ENCODE measurements at regions of chr5 and their contacts with region 1.

Region 1: DNA sequence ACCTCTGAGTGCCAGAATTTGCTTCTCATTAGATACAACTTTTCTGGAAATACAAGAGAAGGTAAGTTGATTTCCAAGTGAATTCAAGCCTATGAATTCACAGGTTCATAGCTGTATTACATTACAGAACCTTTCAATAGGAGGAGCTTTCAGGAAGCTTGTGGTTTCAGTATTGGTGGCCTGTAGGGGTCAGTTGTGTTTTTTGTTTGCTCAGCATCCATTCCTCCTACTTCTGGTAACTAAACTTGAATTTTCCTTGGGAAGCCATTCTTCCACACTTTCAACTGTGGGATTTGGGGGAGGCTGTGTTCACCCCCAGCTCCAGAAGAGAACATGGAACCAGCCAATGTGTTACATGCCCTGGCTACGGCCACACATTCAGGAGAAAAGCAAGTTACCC is 5.6 kb upstream of the CYSTM1 start:
- DNase-seq: no peak
- H3K4me3 ChIP-seq: no peak overlapping the region
- H3K27ac ChIP-seq: no peak overlapping the region
- H3K4me1 ChIP-seq: peaks cover 0 to under 1% (median 0%) of the 10 kb centered on the region in 4 experiments; a peak in 3 of 7 replicates
- H3K27me3 ChIP-seq: no peaks in the 10 kb centered on the region
- CTCF ChIP-seq: peak in 2 of 3 experiments; percentile 22 to 39; a peak in 2 of 4 replicates
- EP300 ChIP-seq: no peak
- POLR2A ChIP-seq: no peak
- RAD21 ChIP-seq: peak; percentile 16 to 38; a peak in 2 of 4 replicates

Region 2: DNA sequence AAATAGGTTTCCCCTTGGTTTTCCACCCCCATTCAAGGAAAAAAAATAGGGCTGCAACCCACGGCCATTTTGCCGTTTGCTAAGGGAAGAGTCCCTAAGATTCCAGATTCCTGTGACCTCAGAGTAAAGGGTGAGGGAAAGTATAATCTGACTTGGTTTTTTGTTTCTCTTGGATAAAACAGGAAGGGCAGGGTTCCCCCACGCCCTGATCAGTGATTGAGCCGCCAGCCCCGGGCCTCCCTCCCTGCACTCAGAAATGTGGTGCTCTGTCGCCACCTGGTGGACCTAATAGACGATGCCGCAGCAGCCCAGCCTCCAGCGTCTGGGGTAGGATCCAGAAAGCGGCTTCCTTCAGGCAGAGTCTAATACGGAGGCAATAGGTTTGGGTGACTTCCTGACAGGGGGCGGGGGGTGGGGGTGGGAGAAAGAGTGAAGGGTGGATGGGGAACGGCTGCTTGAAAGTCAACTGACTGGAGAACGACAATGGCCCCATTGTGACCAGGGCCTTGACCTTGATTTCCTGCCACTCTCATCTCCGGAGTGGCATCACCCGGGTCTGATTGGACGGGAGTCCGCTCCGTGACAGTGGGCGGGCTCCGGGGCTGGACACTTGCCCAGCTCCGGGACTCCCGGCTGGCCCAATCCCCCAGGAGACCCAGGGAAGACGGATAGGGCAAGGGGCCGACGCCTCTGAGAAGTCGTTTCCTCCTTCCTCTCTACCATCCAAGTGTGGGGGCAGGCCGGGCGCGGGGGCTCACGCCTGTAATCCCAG is 12.2 kb before region 1 on chr5:
- CTCF ChIA-PET with region 1: interaction called, 19 read pairs
- POLR2A ChIA-PET with region 1: interaction called, 4 read pairs
- DNase-seq: peak in 1 of 2 experiments; percentile 96
- H3K4me3 ChIP-seq: peak overlapping the region in 3 of 4 experiments; percentile 19 to 52 (median 26); a peak in 6 of 8 replicates
- H3K27ac ChIP-seq: no peak overlapping the region
- H3K4me1 ChIP-seq: peaks cover 6 to 19% (median 14%) of the 10 kb centered on the region in 4 experiments
- H3K27me3 ChIP-seq: peaks cover 0 to 8% (median 6%) of the 10 kb centered on the region in 4 experiments; a peak in 4 of 7 replicates
- CTCF ChIP-seq: peak; percentile 89 to 96 (median 89)
- EP300 ChIP-seq: no peak; a peak in 1 of 3 replicates
- POLR2A ChIP-seq: no peak
- RAD21 ChIP-seq: peak; percentile 96 to 98

Region 3: GRCh38 chr5:140182075-140182709 is 12.8 kb after region 1 on chr5:
- CTCF ChIA-PET with region 1: interaction called, 13 read pairs
- POLR2A ChIA-PET with region 1: no interaction called
- DNase-seq: no peak
- H3K4me3 ChIP-seq: no peak overlapping the region
- H3K27ac ChIP-seq: no peak overlapping the region
- H3K4me1 ChIP-seq: peaks cover 2 to 7% (median 4%) of the 10 kb centered on the region in 4 experiments
- H3K27me3 ChIP-seq: no peaks in the 10 kb centered on the region
- CTCF ChIP-seq: no peak
- EP300 ChIP-seq: no peak
- POLR2A ChIP-seq: no peak
- RAD21 ChIP-seq: no peak